Naive thymus-derived CD4-positive, alpha-beta T cell (primary cell): ENCODE measurements at regions of chrX and their contacts with region 1.

Region 1: GRCh38 chrX:125475482-125475881 is 155.8 kb downstream of the TEX13C start:
- DNase-seq: no peak
- ATAC-seq: no peak
- H3K4me3 ChIP-seq: no peak overlapping the region
- H3K4me3 Mint-ChIP-seq: no peak overlapping the region
- H3K27ac ChIP-seq: no peak overlapping the region
- H3K27ac Mint-ChIP-seq: no peak overlapping the region
- H3K4me1 ChIP-seq: no peaks in the 10 kb centered on the region
- H3K4me1 Mint-ChIP-seq: no peaks in the 10 kb centered on the region
- H3K27me3 ChIP-seq: no peaks in the 10 kb centered on the region
- H3K27me3 Mint-ChIP-seq: no peaks in the 10 kb centered on the region

Region 2: GRCh38 chrX:125673758-125674157 is 198.3 kb after region 1 on chrX:
- CTCF ChIA-PET with region 1: no interaction called
- POLR2A ChIA-PET with region 1: no interaction called
- intact Hi-C with region 1: loop called in 1 of 2 experiments (anchors 10 kb)
- DNase-seq: no peak
- ATAC-seq: no peak
- H3K4me3 ChIP-seq: no peak overlapping the region
- H3K4me3 Mint-ChIP-seq: no peak overlapping the region
- H3K27ac ChIP-seq: no peak overlapping the region
- H3K27ac Mint-ChIP-seq: no peak overlapping the region
- H3K4me1 ChIP-seq: no peaks in the 10 kb centered on the region
- H3K4me1 Mint-ChIP-seq: no peaks in the 10 kb centered on the region
- H3K27me3 ChIP-seq: no peaks in the 10 kb centered on the region
- H3K27me3 Mint-ChIP-seq: no peaks in the 10 kb centered on the region